Kidney (tissue), 22 donors: ENCODE measurements at regions of chr1 and their contacts with region 1.

Region 1: DNA sequence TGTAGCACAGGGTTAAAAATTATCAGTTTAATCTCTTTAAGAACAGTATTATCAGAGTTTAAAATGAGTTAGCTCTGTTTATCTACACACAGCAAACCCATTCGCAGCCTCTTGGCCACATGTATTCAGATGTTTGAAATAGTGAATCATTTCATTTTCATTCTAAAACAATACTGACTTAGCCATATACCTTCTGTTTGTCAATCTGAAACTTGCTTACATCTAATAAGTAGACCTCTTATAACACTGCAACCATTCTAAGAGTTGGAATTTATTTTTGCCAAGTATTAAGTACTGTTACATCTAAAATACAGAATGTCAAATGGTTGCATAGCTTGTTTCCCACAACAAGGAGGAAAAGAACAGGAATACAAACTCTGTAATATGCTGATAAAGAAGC is 25.4 kb downstream of the ANGEL2 start:
- DNase-seq: no peak
- H3K4me3 ChIP-seq: no peak overlapping the region
- H3K27ac ChIP-seq: no peak overlapping the region
- H3K4me1 ChIP-seq: peaks cover 0 to 9% (median 2%) of the 10 kb centered on the region in 3 donors
- H3K27me3 ChIP-seq: no peaks in the 10 kb centered on the region
- CTCF ChIP-seq: no peak

Region 2: GRCh38 chr1:212814537-212815334 is 175.5 kb before region 1 on chr1:
- intact Hi-C with region 1: loop called (anchors 10 kb)
- DNase-seq: peak in 2 of 5 donors; percentile 34 to 50
- H3K4me3 ChIP-seq: no peak overlapping the region
- H3K27ac ChIP-seq: no peak overlapping the region
- H3K4me1 ChIP-seq: no peaks in the 10 kb centered on the region
- H3K27me3 ChIP-seq: no peaks in the 10 kb centered on the region
- CTCF ChIP-seq: peak; percentile 26

Region 3: DNA sequence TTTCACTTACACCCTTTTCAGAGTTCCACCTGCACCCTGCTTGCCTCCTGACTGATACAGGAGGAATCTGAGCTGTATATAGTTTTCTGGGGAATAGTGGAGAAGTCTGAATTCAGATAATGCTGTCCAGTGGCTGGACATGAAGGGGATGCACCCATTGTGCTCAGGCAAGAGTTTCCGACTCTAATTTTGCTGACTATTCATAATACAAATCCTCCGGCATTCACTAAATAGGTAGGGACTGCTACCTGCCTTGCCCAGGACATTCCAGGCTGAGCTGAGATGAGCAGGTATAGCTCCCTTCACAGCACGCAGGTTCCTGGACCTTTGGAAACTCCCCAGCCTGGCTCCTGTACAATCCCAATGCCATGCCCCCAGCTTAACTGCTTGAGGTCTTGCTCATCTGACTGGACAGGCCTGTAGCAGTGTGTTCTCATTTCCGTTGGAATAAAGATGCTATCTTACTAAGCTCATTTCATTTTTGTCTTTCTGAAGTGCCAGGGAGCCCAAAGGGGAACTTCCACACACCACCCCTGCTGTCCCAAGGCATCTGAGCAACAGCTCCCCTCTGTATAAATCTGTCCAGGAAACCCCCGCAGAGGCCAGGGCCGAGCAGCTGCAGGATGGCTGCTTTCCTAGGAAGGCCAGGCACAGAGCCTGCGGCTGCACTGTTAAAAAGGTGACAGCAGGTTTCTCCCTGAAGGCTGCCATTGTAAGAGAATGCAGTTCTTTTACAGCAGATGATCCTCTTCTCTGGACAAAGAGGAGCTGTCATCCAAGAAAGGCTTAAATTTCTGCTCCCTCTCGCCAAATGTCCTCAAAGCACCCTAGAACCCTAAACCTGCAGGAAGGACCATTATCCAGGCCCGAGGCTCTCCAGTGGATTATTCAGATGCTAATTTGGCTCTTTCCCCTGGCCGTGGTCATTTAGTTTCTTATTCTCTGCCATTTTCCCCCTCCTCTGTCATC is 61.7 kb before region 1 on chr1:
- intact Hi-C with region 1: no loop called
- DNase-seq: no peak
- H3K4me3 ChIP-seq: no peak overlapping the region
- H3K27ac ChIP-seq: no peak overlapping the region
- H3K4me1 ChIP-seq: no peaks in the 10 kb centered on the region
- H3K27me3 ChIP-seq: no peaks in the 10 kb centered on the region
- CTCF ChIP-seq: no peak

Region 4: GRCh38 chr1:213357403-213357802 is 367.1 kb after region 1 on chr1:
- intact Hi-C with region 1: no loop called
- DNase-seq: no peak
- H3K4me3 ChIP-seq: no peak overlapping the region
- H3K27ac ChIP-seq: no peak overlapping the region
- H3K4me1 ChIP-seq: no peaks in the 10 kb centered on the region
- H3K27me3 ChIP-seq: no peaks in the 10 kb centered on the region
- CTCF ChIP-seq: no peak